ENCODE measurements at regions of chr13 and their contacts with region 1.

Region 1: DNA sequence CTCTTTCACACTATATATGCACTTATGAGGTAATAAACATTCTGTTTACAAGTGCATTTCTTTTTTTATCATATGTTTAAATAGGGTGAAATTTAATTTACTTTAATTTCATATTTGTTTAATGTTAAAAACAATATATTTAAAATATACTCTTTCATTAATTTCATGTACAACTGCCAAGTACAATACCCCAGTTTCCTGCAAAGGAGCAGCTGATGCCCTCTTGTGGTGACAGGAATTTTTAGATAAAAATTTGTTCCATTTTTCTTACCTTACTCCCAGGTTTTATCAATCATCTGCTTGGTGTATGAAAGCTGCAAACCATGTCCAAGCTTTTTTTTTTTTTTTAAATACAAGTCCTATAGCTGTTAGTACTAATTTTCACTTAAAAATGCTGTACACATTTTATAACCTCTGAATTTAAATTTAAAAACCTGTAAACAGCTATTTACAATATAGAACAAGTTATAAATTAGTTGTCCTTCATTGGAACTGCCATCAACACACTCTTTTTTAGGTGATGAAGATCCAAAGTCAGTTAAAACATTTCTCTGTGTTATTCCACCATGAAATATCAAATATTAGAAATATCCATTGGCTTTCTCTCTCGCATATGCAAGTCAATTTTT is 4.9 kb downstream of the PCDH20 start:
- DNase-seq: no peak
- ATAC-seq: no peak

Region 2: GRCh38 chr13:60654415-60654814 is 756.4 kb before region 1 on chr13:
- intact Hi-C with region 1: loop called (anchors 10 kb)
- DNase-seq: peak; percentile 60
- ATAC-seq: peak; percentile 92

Region 3: DNA sequence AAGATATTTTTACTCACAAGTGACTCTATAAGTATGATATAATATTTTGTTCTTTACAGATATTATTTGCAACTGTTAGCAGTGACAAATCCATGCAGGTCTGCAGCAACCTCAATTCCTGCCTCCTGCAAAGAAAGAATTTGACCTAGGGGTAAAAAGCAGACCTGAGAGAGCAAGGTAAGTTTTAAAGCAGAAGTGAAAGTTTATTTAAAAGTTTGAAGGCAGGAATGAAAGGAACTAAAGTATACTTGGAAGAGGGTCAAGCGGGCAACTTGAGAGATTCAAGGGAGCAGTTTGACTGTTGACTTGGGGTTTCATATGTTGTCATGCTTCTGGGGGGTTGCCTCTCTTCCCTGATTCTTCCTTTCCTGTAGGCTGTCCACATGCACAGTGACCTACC is 524.9 kb after region 1 on chr13:
- intact Hi-C with region 1: no loop called
- DNase-seq: no peak
- ATAC-seq: no peak

Measured in Right ventricle myocardium superior (tissue), 1 donor.